Lower leg skin (tissue), 4 donors: ENCODE measurements at regions of chr11 and their contacts with region 1.

Region 1: DNA sequence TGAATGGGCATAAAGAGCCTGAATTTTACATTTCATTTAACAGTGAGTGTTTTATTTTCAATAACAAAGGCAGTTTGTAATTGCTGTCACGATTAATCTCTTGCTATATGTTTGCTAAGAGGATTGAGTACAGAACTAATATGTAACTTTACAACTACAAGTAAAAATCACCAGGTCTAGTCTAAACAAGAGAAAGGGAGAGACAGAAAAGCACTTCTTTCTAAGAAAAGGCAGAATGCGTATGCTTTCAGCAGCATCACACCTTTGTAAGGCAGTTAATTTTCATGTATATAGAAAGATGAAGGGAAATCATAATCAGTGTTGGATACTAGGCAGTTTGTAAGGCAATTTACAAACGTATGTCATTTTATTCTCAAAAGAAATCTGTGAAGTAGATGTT is 169.8 kb downstream of the NELL1 start:
- DNase-seq: no peak
- H3K4me3 ChIP-seq: no peak overlapping the region
- CTCF ChIP-seq: no peak
- POLR2A ChIP-seq: no peak

Region 2: GRCh38 chr11:20501971-20502370 is 337.3 kb before region 1 on chr11:
- intact Hi-C with region 1: no loop called
- DNase-seq: no peak
- H3K4me3 ChIP-seq: no peak overlapping the region
- CTCF ChIP-seq: no peak
- POLR2A ChIP-seq: no peak

Region 3: DNA sequence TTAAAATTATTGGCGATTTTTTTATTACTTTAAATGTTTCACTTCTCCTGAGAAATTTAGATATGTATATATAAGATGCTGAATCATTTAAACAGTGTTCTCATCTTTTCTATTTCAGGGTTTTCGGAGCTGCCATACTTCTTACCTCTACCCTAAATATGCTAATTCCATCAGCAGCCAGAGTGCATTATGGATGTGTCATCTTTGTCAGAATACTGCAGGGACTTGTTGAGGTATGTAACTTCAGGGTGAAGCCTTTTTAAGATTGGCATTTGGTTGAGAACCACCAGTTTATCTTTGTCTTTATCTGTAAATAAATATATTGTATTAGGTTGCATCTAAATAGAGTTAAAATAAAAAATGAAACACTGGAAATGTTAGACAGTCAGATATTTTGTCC is 1520.1 kb after region 1 on chr11:
- intact Hi-C with region 1: loop called (anchors 10 kb)
- DNase-seq: no peak
- H3K4me3 ChIP-seq: no peak overlapping the region
- CTCF ChIP-seq: no peak
- POLR2A ChIP-seq: no peak